ENCODE measurements at regions of chr5 and their contacts with region 1.

Region 1: DNA sequence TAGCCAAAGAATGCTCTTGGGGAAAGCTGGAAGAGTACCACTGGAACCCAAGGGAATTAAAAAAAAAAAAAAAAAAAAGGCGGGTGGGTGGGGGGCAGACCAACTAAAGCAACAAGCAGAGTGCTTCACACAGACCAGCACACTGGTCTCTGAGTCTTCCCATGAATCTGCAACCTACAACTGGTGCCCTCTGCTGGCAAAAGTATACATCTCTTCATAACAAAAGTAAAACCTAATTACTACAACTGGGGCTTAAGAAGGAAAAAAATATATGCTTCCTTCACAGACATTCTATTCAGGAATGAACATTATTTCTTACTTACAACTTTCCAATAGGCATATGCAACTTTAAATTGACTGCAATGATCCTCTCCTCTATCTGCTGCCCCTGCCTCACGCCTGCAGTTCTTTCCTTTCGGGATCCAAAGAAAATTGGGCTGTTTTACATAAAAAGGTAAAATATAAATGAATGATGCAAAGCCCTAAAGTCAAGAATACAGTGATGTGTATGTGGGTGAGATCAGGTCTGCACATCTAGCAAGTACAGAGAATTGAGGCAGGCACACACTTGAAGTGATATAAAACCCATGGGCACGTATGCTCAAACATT is 7.2 kb upstream of the KLHL3 start:
- DNase-seq: peak; percentile 45
- ATAC-seq: peak; percentile 83 to 85

Region 2: GRCh38 chr5:137605411-137605810 is 137.7 kb before region 1 on chr5:
- intact Hi-C with region 1: no loop called
- DNase-seq: no peak
- ATAC-seq: peak in 1 of 2 donors; percentile 68

Region 3: DNA sequence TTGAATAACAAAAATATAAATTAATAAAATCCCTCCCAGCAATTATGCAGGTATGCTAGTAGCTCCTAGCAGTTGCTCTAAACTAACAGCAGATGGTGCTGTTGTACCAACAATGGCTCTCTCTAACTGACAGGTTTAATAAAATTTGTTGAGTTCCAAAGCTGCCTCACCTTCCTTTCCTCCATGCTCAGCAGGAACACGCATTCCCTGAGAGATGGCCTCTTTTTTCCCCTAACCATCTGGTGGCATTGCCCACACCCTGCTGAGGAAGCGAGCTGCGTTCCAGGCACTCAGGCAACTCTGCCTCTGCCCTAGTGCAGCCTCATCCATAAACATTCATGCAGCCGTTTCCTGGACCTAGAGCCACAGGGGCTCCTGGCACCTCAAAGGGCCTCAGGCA is 113.5 kb before region 1 on chr5:
- intact Hi-C with region 1: loop called in 1 of 2 experiments (anchors 2 kb)
- DNase-seq: no peak
- ATAC-seq: peak; percentile 75 to 77

Region 4: DNA sequence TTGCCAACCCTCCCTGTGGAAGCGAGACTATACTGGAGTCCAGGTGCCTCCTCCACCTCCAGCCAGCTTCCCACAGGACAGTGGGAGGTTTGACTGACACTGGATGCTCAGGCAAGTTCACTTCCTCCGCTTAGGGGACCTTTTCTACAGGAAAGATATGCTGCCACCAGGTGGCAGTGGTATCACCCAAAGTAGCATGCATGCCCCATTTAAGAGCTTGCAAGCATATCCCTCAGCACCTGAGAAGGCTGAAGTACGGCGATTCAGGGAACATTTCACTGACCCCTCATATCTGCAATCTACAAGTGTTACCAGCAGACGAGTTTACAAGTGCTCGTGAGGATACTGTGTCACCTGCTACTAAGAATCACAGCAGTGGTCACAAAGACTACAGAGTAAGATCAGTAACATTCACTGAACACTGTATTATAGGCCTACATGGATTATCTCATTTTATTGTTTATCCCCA is 82.8 kb before region 1 on chr5:
- intact Hi-C with region 1: loop called (anchors 1 to 5 kb)
- DNase-seq: peak; percentile 76
- ATAC-seq: peak; percentile 88 to 91